ENCODE measurements at regions of chr21 and their contacts with region 1.

Region 1: GRCh38 chr21:42062236-42063022 is 8.7 kb upstream of the UMODL1 start:
- DNase-seq: peak; percentile 81 to 98 (median 94)
- H3K4me3 ChIP-seq: peak overlapping the region; percentile 84
- H3K4me3 Mint-ChIP-seq: peak overlapping the region; percentile 61 to 94 (median 88)
- H3K27ac ChIP-seq: peak overlapping the region; percentile 63
- H3K27ac Mint-ChIP-seq: peak overlapping the region; percentile 92 to 100 (median 99)
- H3K4me1 ChIP-seq: peaks cover 43% of the 10 kb centered on the region
- H3K4me1 Mint-ChIP-seq: peaks cover 38 to 64% (median 53%) of the 10 kb centered on the region in 3 donors
- H3K27me3 ChIP-seq: no peaks in the 10 kb centered on the region
- H3K27me3 Mint-ChIP-seq: peaks cover 0 to 1% of the 10 kb centered on the region in 2 donors

Region 2: GRCh38 chr21:41833497-41834115 is 228.8 kb before region 1 on chr21:
- CTCF ChIA-PET with region 1: no interaction called
- POLR2A ChIA-PET with region 1: no interaction called
- DNase-seq: no peak
- H3K4me3 ChIP-seq: no peak overlapping the region
- H3K4me3 Mint-ChIP-seq: no peak overlapping the region
- H3K27ac ChIP-seq: no peak overlapping the region
- H3K27ac Mint-ChIP-seq: peak overlapping the region in 1 of 8 donors; percentile 9
- H3K4me1 ChIP-seq: no peaks in the 10 kb centered on the region
- H3K4me1 Mint-ChIP-seq: no peaks in the 10 kb centered on the region
- H3K27me3 ChIP-seq: no peaks in the 10 kb centered on the region
- H3K27me3 Mint-ChIP-seq: no peaks in the 10 kb centered on the region

Region 3: DNA sequence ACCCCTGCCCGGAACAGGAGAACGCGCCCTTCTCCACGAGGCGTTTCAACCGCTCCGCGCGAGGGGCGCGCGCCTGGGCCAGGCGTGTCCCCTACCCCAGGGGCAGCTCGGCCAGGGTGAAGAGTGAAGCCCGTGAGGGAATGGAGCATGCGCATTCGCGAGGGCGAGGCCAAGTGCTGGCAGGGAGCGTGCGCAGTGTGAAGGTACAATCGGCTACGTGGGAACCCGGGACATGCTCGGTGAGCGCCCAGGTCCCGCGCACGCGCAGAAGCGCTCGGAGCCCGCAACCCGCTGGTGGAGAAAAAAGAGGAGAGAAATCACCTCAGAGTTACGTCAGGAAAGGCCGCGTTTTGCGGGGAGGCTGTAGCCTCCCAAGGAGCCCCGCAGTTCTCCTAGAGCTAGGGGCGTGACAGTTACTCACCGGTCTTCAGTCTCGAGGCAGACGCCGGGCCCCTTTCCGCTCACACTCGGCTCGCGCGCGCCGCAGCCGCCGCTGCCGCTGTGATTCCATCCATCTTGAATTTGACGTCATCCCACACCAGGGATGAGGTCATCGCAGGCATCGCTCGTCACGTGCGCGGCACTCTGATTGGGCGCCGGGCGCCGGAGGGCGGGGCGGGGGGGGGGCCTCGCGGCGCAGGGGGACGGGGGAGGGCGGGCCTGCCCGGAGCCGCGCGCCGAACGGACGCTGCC is 52.5 kb before region 1 on chr21 and contains the start of gene ZBTB21:
- CTCF ChIA-PET with region 1: interaction called, 12 read pairs
- POLR2A ChIA-PET with region 1: interaction called, 16 read pairs
- DNase-seq: peak; percentile 97 to 99 (median 98)
- H3K4me3 ChIP-seq: peak within 1 kb of the TSS; percentile 65
- H3K4me3 Mint-ChIP-seq: peak within 1 kb of the TSS; percentile 93 to 99 (median 97)
- H3K27ac ChIP-seq: peak within 1 kb of the TSS; percentile 98
- H3K27ac Mint-ChIP-seq: peak within 1 kb of the TSS; percentile 98 to 100 (median 100)
- H3K4me1 ChIP-seq: peaks cover 10% of the 10 kb centered on the region
- H3K4me1 Mint-ChIP-seq: peaks cover 10 to 37% (median 23%) of the 10 kb centered on the region in 3 donors
- H3K27me3 ChIP-seq: no peaks in the 10 kb centered on the region
- H3K27me3 Mint-ChIP-seq: peaks cover 0 to 6% of the 10 kb centered on the region in 2 donors
- total RNA-seq, gene ZBTB21: 39.0 to 43.6 TPM

Region 4: GRCh38 chr21:42080788-42081083 is 18.3 kb after region 1 on chr21:
- CTCF ChIA-PET with region 1: no interaction called
- POLR2A ChIA-PET with region 1: no interaction called
- DNase-seq: no peak
- H3K4me3 ChIP-seq: no peak overlapping the region
- H3K4me3 Mint-ChIP-seq: no peak overlapping the region
- H3K27ac ChIP-seq: no peak overlapping the region
- H3K27ac Mint-ChIP-seq: no peak overlapping the region
- H3K4me1 ChIP-seq: no peaks in the 10 kb centered on the region
- H3K4me1 Mint-ChIP-seq: peaks cover 0 to 3% (median 0%) of the 10 kb centered on the region in 3 donors
- H3K27me3 ChIP-seq: no peaks in the 10 kb centered on the region
- H3K27me3 Mint-ChIP-seq: peaks cover 4% of the 10 kb centered on the region in 2 donors